ENCODE measurements at regions of chr2 and their contacts with region 1.

Region 1: DNA sequence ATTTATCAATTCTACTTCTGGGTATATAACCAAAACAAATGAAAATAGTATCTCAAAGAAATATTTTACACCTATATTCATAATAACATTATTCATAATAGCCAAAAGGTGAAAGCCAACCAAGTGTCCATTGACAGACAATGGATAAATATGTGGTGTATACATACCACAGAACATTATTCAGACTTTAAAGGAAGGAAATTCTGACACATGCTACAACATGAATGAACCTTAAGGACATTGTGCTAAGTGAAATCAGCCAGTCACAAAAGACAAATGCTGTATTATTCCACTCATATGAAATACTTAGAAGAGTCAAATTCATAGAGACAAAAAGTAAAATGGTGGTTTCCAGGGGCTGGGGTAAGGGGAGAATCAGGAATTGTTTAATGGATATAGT is 370.5 kb upstream of the CHAC2 start:
- DNase-seq: no peak
- H3K4me3 ChIP-seq: no peak overlapping the region
- H3K27ac ChIP-seq: no peak overlapping the region
- H3K4me1 ChIP-seq: no peaks in the 10 kb centered on the region
- H3K27me3 ChIP-seq: no peaks in the 10 kb centered on the region
- CTCF ChIP-seq: no peak

Region 2: DNA sequence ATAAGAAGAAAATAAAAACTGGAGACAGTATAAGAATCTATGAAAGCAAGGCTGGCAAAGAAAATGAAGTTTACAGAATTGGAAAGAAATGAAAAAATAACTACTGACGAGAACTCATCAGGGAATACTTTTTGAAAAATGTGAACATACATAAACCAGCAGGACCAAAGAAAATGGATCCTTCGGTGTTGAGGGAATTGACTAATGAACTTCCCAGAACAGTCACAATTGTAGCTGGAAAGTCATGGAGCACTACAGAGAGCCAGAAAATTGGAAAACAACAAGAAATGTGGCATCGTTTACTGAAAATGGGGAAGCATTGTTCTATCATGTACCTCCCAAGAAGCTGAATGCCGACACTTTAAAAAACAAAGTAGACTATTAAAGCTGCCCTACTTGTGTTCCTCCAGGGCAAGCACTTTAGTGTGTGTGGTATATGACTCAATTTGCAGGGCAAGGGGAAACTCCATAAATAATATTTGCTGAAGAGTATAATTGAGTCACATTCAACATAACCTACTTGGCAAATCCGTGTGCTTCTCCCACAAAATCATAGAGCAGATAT is 1143.6 kb before region 1 on chr2:
- intact Hi-C with region 1: loop called (anchors 5 kb)
- DNase-seq: no peak
- H3K4me3 ChIP-seq: no peak overlapping the region
- H3K27ac ChIP-seq: no peak overlapping the region
- H3K4me1 ChIP-seq: no peaks in the 10 kb centered on the region
- H3K27me3 ChIP-seq: no peaks in the 10 kb centered on the region
- CTCF ChIP-seq: no peak

Measured in tibial artery (tissue), 4 donors.